Calu3 (cell line): ENCODE measurements at regions of chr1 and their contacts with region 1.

Region 1: GRCh38 chr1:160078512-160079195 is 2.7 kb upstream of the KCNJ9 start:
- DNase-seq: peak; percentile 75
- H3K4me3 Mint-ChIP-seq: no peak overlapping the region
- H3K27ac Mint-ChIP-seq: no peak overlapping the region
- H3K4me1 Mint-ChIP-seq: peaks cover 9% of the 10 kb centered on the region
- H3K27me3 Mint-ChIP-seq: peaks cover 98% of the 10 kb centered on the region
- CTCF ChIP-seq: peak; percentile 93

Region 2: GRCh38 chr1:160031365-160032164 is 47.1 kb before region 1 on chr1 and contains the start of gene PIGM:
- CTCF ChIA-PET with region 1: interaction called, 3 read pairs
- intact Hi-C with region 1: loop called (anchors 5 kb)
- DNase-seq: peak; percentile 98
- H3K4me3 Mint-ChIP-seq: peak within 1 kb of the TSS; percentile 98
- H3K27ac Mint-ChIP-seq: peak within 1 kb of the TSS; percentile 88
- H3K4me1 Mint-ChIP-seq: peaks cover 18% of the 10 kb centered on the region
- H3K27me3 Mint-ChIP-seq: no peaks in the 10 kb centered on the region
- CTCF ChIP-seq: no peak
- total RNA-seq, gene PIGM: 13.2 and 14.1 TPM in 2 replicates

Region 3: GRCh38 chr1:160046494-160047110 is 32.1 kb before region 1 on chr1:
- CTCF ChIA-PET with region 1: interaction called, 21 read pairs
- intact Hi-C with region 1: loop called (anchors 2 kb)
- DNase-seq: peak; percentile 37
- H3K4me3 Mint-ChIP-seq: peak overlapping the region; percentile 9
- H3K27ac Mint-ChIP-seq: no peak overlapping the region
- H3K4me1 Mint-ChIP-seq: peaks cover 8% of the 10 kb centered on the region
- H3K27me3 Mint-ChIP-seq: peaks cover 84% of the 10 kb centered on the region
- CTCF ChIP-seq: peak; percentile 66

Region 4: GRCh38 chr1:160058087-160058486 is 20.6 kb before region 1 on chr1:
- CTCF ChIA-PET with region 1: interaction called, 14 read pairs
- intact Hi-C with region 1: no loop called
- DNase-seq: no peak
- H3K4me3 Mint-ChIP-seq: no peak overlapping the region
- H3K27ac Mint-ChIP-seq: no peak overlapping the region
- H3K4me1 Mint-ChIP-seq: no peaks in the 10 kb centered on the region
- H3K27me3 Mint-ChIP-seq: peaks cover 77% of the 10 kb centered on the region
- CTCF ChIP-seq: no peak

Region 5: GRCh38 chr1:160169553-160170399 is 91.1 kb after region 1 on chr1:
- CTCF ChIA-PET with region 1: no interaction called
- intact Hi-C with region 1: no loop called
- DNase-seq: no peak
- H3K4me3 Mint-ChIP-seq: no peak overlapping the region
- H3K27ac Mint-ChIP-seq: no peak overlapping the region
- H3K4me1 Mint-ChIP-seq: no peaks in the 10 kb centered on the region
- H3K27me3 Mint-ChIP-seq: peaks cover 88% of the 10 kb centered on the region
- CTCF ChIP-seq: no peak

Region 6: GRCh38 chr1:160277330-160277729 is 198.7 kb after region 1 on chr1:
- CTCF ChIA-PET with region 1: no interaction called
- intact Hi-C with region 1: no loop called
- DNase-seq: no peak
- H3K4me3 Mint-ChIP-seq: no peak overlapping the region
- H3K27ac Mint-ChIP-seq: no peak overlapping the region
- H3K4me1 Mint-ChIP-seq: no peaks in the 10 kb centered on the region
- H3K27me3 Mint-ChIP-seq: no peaks in the 10 kb centered on the region
- CTCF ChIP-seq: no peak